Panc1 (cell line): ENCODE measurements at regions of chr3 and their contacts with region 1.

Region 1: DNA sequence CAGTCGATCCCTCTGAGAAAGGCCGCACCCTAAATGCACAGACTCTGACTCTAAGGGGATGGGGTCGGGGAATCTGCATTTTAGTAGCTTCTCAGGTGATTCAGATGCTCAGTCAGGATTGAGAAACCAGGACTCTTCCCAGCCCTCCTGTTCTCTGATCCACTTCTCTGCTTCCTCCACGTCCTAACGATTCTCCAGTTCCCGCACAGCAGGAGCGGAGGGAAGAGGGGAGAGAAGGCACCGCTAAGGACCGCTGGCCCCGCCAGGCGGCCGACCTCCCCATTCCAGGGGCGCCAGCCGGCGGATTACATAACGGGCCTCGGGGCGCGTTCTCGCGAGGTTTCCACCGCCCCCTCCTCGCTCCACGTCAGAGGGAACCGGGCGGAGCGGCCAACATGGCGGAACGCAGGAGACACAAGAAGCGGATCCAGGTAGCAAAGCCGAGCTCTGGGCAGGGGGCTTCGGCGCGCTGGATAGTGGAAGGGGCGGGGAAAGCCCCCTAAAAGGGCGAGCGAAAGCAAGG is at the start of gene SEC62:
- DNase-seq: peak; percentile 46
- ATAC-seq: peak; percentile 99
- H3K4me3 ChIP-seq: peak within 1 kb of the TSS; percentile 83 to 84
- H3K27ac ChIP-seq: peak within 1 kb of the TSS; percentile 93
- H3K4me1 ChIP-seq: peaks cover 10% of the 10 kb centered on the region; the same call in 1 of the 2 replicates
- H3K27me3 ChIP-seq: peaks cover 6% of the 10 kb centered on the region; the same call in 1 of the 2 replicates
- CTCF ChIP-seq: peak; percentile 68
- total RNA-seq, gene SEC62: 89.9 TPM

Region 2: DNA sequence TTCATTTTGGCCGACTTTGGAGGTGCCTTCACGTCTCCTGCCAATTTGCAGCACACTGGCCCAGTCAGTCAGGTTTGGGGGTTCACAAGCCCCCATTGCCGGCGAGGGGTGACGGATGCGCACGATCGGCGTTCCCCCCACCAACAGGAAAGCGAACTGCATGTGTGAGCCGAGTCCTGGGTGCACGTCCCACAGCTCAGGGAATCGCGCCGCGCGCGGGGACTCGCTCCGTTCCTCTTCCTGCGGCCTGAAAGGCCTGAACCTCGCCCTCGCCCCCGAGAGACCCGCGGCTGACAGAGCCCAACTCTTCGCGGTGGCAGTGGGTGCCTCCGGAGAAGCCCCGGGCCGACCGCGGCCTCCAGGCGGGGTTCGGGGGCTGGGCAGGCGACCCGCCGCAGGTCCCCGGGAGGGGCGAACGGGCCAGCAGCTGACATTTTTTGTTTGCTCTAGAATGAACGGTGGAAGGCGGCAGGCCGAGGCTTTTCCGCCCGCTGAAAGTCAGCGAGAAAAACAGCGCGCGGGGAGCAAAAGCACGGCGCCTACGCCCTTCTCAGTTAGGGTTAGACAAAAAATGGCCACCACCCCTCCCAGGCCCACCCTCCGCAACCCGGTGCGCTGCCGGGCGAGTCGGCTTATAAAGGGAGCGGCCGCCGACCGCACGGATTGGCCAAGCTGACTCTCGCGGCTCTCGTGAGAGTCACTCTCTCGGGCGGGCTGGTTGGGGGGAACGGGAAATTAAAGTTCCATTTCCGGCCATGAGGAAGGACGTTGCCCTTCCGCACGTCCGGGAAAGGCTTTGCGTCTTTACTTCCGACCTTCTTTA is 201.8 kb before region 1 on chr3 and contains the start of gene TERC:
- CTCF ChIA-PET with region 1: no interaction called
- POLR2A ChIA-PET with region 1: no interaction called
- in situ Hi-C with region 1: no loop called
- intact Hi-C with region 1: loop called (anchors 5 kb)
- DNase-seq: peak; percentile 59
- ATAC-seq: peak; percentile 93
- H3K4me3 ChIP-seq: peak within 1 kb of the TSS; percentile 64 to 83
- H3K27ac ChIP-seq: peak within 1 kb of the TSS; percentile 93
- H3K4me1 ChIP-seq: 0 out of 2 replicates have a peak, but pooled peaks cover 2% of the 10 kb centered on the region
- H3K27me3 ChIP-seq: no peaks in the 10 kb centered on the region
- CTCF ChIP-seq: no peak
- total RNA-seq, gene TERC: 6.0 TPM

Region 3: GRCh38 chr3:169863458-169863899 is 103.0 kb before region 1 on chr3:
- CTCF ChIA-PET with region 1: interaction called, 3 read pairs
- POLR2A ChIA-PET with region 1: no interaction called
- in situ Hi-C with region 1: no loop called
- intact Hi-C with region 1: loop called (anchors 2 kb)
- DNase-seq: peak; percentile 61
- ATAC-seq: peak; percentile 82
- H3K4me3 ChIP-seq: no peak overlapping the region
- H3K27ac ChIP-seq: no peak overlapping the region
- H3K4me1 ChIP-seq: no peaks in the 10 kb centered on the region
- H3K27me3 ChIP-seq: peaks cover 6% of the 10 kb centered on the region
- CTCF ChIP-seq: peak; percentile 97

Region 4: DNA sequence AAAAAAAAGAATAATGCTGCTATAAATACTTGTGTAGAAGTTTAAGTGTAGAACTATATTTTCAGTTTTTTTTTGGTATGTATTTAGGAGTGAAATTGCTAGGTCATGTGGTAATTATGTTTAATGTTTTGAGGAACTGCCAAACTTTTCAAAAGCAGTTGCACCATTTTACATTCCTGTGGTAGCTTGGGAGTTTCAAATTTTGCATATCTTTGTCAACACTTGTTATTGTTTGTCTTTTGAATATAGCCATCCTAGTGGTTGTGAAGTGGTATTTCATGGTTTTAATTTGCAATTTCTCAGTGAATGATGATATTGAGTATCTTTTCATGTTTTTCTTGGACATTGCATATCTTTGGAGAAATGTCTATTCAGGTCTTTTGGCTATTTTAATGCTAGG is 421.5 kb after region 1 on chr3:
- CTCF ChIA-PET with region 1: no interaction called
- POLR2A ChIA-PET with region 1: no interaction called
- in situ Hi-C with region 1: no loop called
- intact Hi-C with region 1: no loop called
- DNase-seq: no peak
- ATAC-seq: no peak
- H3K4me3 ChIP-seq: no peak overlapping the region
- H3K27ac ChIP-seq: no peak overlapping the region
- H3K4me1 ChIP-seq: no peaks in the 10 kb centered on the region
- H3K27me3 ChIP-seq: no peaks in the 10 kb centered on the region
- CTCF ChIP-seq: no peak